Right ventricle myocardium inferior (tissue), 1 donor: ENCODE measurements at regions of chr18 and their contacts with region 1.

Region 1: DNA sequence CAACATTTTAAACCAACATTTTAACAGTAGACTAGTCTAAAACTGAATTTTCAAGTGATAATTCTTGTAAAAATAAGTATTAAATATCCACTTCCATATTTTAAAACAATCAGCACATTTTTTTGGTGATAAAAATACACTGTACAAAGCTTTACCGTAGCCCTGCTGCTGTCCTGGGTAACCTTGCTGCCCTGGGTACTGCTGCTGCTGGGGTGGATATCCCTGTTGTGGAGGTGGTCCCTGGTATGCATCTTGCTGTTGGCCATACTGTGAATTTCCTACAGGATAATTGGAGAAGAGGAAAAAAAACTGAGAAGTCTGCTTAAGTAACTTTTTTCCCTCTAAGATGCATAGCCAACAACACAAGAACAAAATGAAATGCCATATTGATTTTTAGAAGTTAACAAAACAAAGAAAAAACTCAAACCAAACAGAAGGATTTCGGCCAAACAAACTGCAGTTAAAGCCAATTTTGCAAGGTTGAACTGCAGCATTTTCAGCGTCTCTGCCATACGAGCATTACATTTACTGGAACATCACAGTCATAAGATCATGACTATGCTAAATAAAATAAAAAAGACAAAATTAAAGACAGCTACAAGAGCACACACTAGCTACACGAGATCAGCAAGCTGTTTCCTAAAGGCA is 55.4 kb downstream of the SS18 start:
- DNase-seq: no peak
- ATAC-seq: no peak

Region 2: DNA sequence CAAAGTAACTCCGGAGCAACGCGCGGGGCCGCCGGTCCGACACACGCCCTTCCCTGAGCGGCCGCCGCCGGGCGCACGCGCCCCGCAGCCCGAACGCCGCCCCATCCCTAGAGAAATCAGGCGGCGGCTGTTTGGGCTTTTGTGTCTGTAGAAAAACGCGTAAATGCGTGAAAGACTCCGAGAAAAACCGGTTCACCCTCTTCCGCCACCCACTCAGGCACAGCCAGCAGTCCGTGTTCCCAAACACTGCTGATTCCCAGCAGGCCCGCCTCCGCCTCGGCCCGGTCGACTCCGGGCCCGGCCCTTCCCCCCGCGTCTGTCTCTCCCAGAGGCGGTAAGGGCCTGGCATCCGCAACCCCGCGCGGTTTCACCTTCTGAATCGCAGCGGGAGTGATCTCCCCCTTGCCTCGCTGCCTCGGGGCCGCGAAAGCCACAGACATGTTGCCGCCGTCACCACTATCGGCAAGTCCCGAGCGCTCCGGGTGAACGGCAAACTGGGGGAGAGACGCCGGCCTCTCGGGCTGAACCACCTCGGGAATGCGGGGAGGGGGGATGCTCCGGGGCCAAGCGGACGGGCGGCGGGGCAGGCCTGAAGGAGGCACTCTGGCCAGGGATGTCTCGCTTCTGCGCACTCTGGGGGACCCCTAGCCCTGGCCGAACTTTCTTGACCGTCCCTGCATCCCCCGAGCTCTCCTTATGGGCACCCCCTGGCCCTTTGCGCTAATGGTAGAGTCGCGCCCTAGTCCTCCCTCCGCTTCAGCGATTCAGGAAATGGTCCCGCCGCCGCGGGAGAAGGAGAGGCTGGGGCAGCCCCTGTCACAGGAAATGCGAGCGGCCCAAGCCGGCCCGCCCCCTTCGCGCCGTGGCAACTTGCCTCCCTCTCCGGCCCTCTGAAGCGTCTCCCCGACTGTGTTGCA is 55.4 kb after region 1 on chr18 and contains the start of gene SS18:
- intact Hi-C with region 1: loop called (anchors 10 kb)
- DNase-seq: peak; percentile 95
- ATAC-seq: peak; percentile 98
- total RNA-seq, gene SS18: 27.2 TPM